Activated CD8-positive, alpha-beta T cell treated with anti-CD3 and anti-CD28 coated beads for 36 hours (primary cell): ENCODE measurements at regions of chr9 and their contacts with region 1.

Region 1: GRCh38 chr9:35696525-35697215 is 6.9 kb upstream of the TPM2 start:
- DNase-seq: peak; percentile 75
- ATAC-seq: peak; percentile 98
- H3K4me3 Mint-ChIP-seq: no peak overlapping the region
- H3K27ac Mint-ChIP-seq: no peak overlapping the region
- H3K4me1 Mint-ChIP-seq: no peaks in the 10 kb centered on the region
- H3K27me3 Mint-ChIP-seq: no peaks in the 10 kb centered on the region
- CTCF ChIP-seq: peak; percentile 95

Region 2: GRCh38 chr9:35603987-35604577 is 92.6 kb before region 1 on chr9:
- CTCF ChIA-PET with region 1: interaction called, 44 read pairs
- POLR2A ChIA-PET with region 1: no interaction called
- intact Hi-C with region 1: no loop called
- DNase-seq: peak; percentile 100
- ATAC-seq: peak; percentile 95
- H3K4me3 Mint-ChIP-seq: peak overlapping the region; percentile 87
- H3K27ac Mint-ChIP-seq: peak overlapping the region; percentile 95
- H3K4me1 Mint-ChIP-seq: peaks cover 28% of the 10 kb centered on the region
- H3K27me3 Mint-ChIP-seq: no peaks in the 10 kb centered on the region
- CTCF ChIP-seq: peak; percentile 95

Region 3: GRCh38 chr9:35616681-35617459 is 79.8 kb before region 1 on chr9:
- CTCF ChIA-PET with region 1: interaction called, 44 read pairs
- POLR2A ChIA-PET with region 1: interaction called, 4 read pairs
- intact Hi-C with region 1: no loop called
- DNase-seq: peak; percentile 88
- ATAC-seq: peak; percentile 45
- H3K4me3 Mint-ChIP-seq: peak overlapping the region; percentile 86
- H3K27ac Mint-ChIP-seq: peak overlapping the region; percentile 96
- H3K4me1 Mint-ChIP-seq: peaks cover 49% of the 10 kb centered on the region
- H3K27me3 Mint-ChIP-seq: no peaks in the 10 kb centered on the region
- CTCF ChIP-seq: peak; percentile 39

Region 4: DNA sequence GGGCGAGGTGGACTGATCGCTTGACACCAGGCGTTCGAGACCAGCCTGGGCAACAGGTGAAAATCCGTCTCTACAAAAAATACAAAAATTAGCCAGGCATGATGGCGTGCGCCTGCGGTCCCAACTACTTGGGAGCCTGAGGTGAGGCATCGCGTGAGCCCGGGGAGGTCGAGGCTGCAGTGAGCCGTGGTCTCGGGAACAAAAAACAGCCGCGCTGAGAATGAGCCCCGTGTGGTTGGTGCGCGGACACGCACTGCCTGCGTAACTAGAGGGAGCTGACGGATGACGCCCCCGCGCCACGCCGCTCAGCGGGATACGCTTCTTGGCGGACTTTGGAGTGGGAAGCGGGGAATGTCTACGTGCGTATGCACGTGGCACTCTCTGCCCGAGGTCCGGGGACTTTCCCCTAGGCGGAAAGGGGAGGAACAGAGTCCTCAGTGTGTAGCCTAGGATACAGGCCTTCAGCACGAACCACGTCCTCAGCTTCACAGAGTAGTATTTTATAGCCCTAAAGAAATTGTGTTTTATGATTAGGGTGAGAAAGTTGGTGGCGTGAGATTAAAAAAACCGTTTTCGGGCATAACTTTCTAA is 39.0 kb before region 1 on chr9 and contains the start of gene RMRP:
- CTCF ChIA-PET with region 1: interaction called, 313 read pairs
- POLR2A ChIA-PET with region 1: interaction called, 5 read pairs
- intact Hi-C with region 1: no loop called
- DNase-seq: peak; percentile 97
- ATAC-seq: peak; percentile 95
- H3K4me3 Mint-ChIP-seq: peak within 1 kb of the TSS; percentile 81
- H3K27ac Mint-ChIP-seq: peak within 1 kb of the TSS; percentile 96
- H3K4me1 Mint-ChIP-seq: peaks cover 59% of the 10 kb centered on the region
- H3K27me3 Mint-ChIP-seq: peaks cover 2% of the 10 kb centered on the region
- CTCF ChIP-seq: no peak
- total RNA-seq, gene RMRP: 13,164 to 13,311 TPM

Region 5: GRCh38 chr9:35748858-35749514 is 52.3 kb after region 1 on chr9 and contains the starts of genes GBA2 and RGP1:
- CTCF ChIA-PET with region 1: interaction called, 21 read pairs
- POLR2A ChIA-PET with region 1: interaction called, 4 read pairs
- intact Hi-C with region 1: no loop called
- DNase-seq: peak; percentile 76
- ATAC-seq: peak; percentile 85
- H3K4me3 Mint-ChIP-seq: peak within 1 kb of the TSS; percentile 94
- H3K27ac Mint-ChIP-seq: peak within 1 kb of the TSS; percentile 88
- H3K4me1 Mint-ChIP-seq: peaks cover 32% of the 10 kb centered on the region
- H3K27me3 Mint-ChIP-seq: no peaks in the 10 kb centered on the region
- CTCF ChIP-seq: no peak
- total RNA-seq, gene GBA2: 21.2 to 22.3 TPM
- total RNA-seq, gene RGP1: 13.0 to 14.8 TPM